ENCODE measurements at regions of chr17 and their contacts with region 1.

Region 1: DNA sequence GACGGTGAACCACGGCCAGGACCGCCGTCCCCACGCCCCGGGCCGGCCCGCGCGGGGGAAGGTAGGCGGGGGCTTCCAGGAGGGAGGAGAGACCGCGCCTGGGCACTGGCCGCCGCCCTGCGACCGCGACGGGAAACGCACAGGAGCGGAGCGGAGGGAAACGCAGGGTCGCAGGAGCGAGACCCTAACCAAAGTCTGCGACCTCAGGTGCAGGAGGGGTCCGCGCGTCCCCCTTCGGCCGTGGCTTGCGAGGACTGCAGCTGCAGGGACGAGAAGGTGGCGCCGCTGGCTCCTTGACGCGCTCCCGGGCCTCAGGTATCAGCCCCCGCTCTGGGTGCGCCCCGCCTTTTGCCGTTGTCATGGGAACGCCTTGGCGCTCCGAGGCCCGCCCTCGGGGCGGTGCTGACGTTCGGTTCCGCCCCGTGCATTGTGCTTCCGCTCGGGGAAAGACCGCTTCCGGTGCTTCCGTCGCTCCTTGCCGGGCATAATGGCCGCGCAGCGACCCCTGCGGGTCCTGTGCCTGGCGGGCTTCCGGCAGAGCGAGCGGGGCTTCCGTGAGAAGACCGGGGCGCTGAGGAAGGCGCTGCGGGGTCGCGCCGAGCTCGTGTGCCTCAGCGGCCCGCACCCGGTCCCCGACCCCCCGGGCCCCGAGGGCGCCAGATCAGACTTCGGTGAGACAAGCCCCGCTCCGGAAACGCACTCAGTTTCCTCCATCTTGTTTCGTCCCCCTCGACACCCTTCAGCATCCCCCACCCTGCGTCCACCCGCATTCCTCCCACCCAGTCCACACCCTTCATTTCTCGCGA is at the start of gene OVCA2:
- DNase-seq: peak; percentile 98
- H3K4me3 Mint-ChIP-seq: peak within 1 kb of the TSS; percentile 96
- H3K27ac Mint-ChIP-seq: peak within 1 kb of the TSS; percentile 97
- H3K4me1 Mint-ChIP-seq: peaks cover 23% of the 10 kb centered on the region
- H3K27me3 Mint-ChIP-seq: no peaks in the 10 kb centered on the region
- total RNA-seq, gene OVCA2: 31.7 to 34.8 TPM

Region 2: DNA sequence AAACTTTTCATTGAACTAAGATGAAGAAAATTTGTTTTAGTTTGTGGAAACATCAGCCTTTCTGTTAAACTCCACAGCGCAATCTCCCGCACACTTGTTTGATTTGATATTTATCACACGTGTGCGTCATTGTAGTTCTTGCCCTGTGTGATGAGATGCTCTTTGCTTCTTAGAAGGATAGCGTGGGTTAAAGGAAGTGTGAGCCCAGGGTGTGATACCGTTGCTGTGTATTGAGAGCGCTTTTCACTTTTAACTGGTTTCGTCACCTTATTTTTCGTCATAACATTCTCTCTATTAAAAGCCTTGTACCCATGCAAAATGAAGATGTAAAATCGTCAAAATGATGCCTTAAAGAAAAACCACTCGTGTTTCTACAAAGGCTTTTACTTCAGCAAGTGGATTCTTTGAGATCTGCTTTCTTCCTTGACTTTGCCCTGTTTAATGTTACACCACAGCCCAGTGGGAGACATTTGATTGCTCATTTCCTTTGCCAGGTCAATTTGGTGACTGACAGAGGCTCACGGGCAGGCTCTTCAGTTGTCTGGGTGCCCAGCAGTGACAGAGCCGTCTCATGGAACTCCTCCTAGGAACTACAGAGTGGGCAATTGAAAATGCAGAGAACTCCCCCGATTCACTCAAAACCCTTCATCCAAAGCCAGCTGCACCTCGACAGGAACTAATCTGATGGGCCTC is 150.9 kb before region 1 on chr17:
- CTCF ChIA-PET with region 1: no interaction called
- POLR2A ChIA-PET with region 1: no interaction called
- intact Hi-C with region 1: loop called (anchors 5 kb)
- DNase-seq: peak; percentile 29
- H3K4me3 Mint-ChIP-seq: no peak overlapping the region
- H3K27ac Mint-ChIP-seq: peak overlapping the region; percentile 55
- H3K4me1 Mint-ChIP-seq: peaks cover 6% of the 10 kb centered on the region
- H3K27me3 Mint-ChIP-seq: no peaks in the 10 kb centered on the region

Region 3: GRCh38 chr17:2023692-2024571 is 17.8 kb before region 1 on chr17:
- CTCF ChIA-PET with region 1: no interaction called
- POLR2A ChIA-PET with region 1: no interaction called
- intact Hi-C with region 1: no loop called
- DNase-seq: peak; percentile 49
- H3K4me3 Mint-ChIP-seq: peak overlapping the region; percentile 59
- H3K27ac Mint-ChIP-seq: no peak overlapping the region
- H3K4me1 Mint-ChIP-seq: peaks cover 9% of the 10 kb centered on the region
- H3K27me3 Mint-ChIP-seq: peaks cover 33% of the 10 kb centered on the region